ENCODE measurements at regions of chr5 and their contacts with region 1.

Region 1: DNA sequence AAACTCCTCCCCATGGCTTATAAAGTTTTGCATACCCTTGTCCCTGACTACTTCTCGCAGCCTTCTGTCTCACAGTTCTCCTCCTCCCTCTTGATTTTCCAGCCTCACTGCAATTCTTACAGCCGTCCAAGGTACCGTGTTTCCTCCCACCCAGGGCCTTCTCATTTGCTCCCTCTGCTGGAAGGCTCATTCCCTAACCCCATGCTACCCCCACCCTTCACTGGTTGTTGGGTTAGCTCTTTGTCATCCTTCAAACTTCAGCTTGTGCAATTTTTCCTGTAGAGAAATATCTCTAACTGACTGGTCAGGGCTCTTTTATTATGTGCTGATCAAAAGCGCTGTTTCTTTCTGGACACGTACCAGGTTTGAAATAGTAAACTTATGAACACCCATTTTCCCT is 329.2 kb downstream of the EBF1 start:
- DNase-seq: no peak
- H3K4me3 ChIP-seq: no peak overlapping the region
- H3K27ac ChIP-seq: peak overlapping the region; percentile 51
- H3K4me1 ChIP-seq: peaks cover 41% of the 10 kb centered on the region
- H3K27me3 ChIP-seq: no peaks in the 10 kb centered on the region
- CTCF ChIP-seq: no peak
- POLR2A ChIP-seq: no peak

Region 2: DNA sequence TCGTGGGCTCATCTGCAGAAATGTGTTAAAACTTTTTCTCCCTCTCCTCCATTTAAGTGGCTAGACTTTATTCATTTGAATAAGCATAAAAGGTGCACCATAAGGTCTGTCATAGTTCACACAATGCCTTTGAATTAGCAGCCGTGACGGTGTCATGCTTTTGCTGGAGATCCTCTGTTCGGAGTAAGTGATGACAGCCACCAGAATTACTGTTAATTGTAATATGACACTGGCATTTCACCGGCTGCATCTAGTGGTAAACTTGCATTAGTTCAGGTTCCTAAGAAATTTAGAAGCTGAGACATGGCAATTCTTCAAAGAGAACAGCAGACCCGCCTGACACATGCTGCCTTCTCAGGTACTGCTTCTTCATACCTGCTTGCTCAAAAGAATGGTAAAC is 87.5 kb after region 1 on chr5:
- intact Hi-C with region 1: no loop called
- DNase-seq: no peak
- H3K4me3 ChIP-seq: no peak overlapping the region
- H3K27ac ChIP-seq: no peak overlapping the region
- H3K4me1 ChIP-seq: peaks cover 7% of the 10 kb centered on the region
- H3K27me3 ChIP-seq: no peaks in the 10 kb centered on the region
- CTCF ChIP-seq: no peak
- POLR2A ChIP-seq: no peak

Region 3: GRCh38 chr5:158979749-158980521 is 209.4 kb after region 1 on chr5:
- intact Hi-C with region 1: no loop called
- DNase-seq: no peak
- H3K4me3 ChIP-seq: peak overlapping the region in 1 of 2 donors; percentile 14
- H3K27ac ChIP-seq: peak overlapping the region; percentile 46
- H3K4me1 ChIP-seq: peaks cover 43% of the 10 kb centered on the region
- H3K27me3 ChIP-seq: no peaks in the 10 kb centered on the region
- CTCF ChIP-seq: no peak
- POLR2A ChIP-seq: no peak

Region 4: DNA sequence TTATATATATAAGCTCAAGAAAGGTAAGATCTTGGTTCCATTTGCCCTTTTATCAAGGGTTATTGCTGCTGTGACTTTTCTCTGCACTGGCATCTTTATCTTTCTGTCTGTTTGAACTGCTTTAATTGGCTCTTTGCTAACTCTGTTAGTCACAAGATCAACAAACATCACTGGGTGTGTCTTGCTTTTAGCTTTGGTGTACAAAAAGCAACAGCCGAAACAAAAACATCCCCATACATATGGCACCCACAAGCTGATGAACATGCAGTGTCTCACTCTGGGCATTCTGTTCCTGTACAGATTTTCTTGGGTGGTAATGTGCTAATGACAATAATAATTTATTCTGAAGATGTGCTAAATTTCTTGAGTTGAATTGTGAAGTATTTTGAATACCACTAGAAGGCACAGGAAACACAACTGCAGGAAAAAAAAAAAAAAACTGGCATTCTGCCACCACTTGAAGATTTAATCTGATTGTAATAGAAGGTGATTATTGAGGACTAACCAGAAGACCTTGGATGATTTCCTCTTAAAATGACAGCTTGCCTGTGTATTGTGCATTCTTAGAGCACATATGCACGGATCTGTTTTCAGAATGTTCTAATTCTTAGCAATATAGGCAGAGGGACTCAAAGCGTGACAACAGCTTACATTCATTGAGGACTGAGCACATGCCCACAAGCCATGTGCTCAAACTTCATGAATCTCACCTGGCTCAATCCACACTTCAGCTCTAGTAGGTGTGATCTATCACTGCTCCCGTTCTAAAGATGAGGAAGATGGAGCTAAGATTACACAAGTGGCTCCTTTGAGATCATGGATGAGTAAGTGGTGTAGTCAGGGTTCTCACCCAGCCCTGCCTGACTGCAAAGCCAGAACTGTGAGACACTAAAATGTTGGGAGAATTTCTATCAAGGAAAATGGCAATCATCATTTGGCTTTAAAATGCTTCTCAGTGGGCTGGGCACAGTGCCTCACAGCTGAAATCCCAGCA is 232.8 kb after region 1 on chr5:
- intact Hi-C with region 1: loop called (anchors 10 kb)
- DNase-seq: no peak
- H3K4me3 ChIP-seq: no peak overlapping the region
- H3K27ac ChIP-seq: peak overlapping the region; percentile 61
- H3K4me1 ChIP-seq: peaks cover 43% of the 10 kb centered on the region
- H3K27me3 ChIP-seq: no peaks in the 10 kb centered on the region
- CTCF ChIP-seq: no peak
- POLR2A ChIP-seq: no peak

Region 5: DNA sequence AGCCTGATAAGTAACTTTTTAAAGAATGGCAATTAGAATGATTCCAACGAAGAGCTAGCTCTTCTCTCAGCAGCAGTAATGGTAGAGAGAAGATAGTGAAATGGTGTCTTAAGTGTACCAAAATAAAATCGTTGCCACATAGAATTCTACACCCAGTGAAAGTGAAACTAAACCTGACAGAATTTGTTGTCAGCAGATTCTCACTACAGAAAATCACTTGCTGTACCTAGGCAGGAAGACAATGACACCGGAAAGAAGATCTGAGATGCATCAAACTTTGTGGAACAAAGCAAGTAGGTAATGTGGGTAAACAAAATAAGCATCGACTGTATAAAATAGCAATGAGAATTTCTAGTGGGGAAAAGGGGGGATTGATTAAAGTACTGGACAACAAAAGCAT is 349.9 kb after region 1 on chr5:
- intact Hi-C with region 1: no loop called
- DNase-seq: no peak
- H3K4me3 ChIP-seq: peak overlapping the region in 1 of 2 donors; percentile 12
- H3K27ac ChIP-seq: no peak overlapping the region
- H3K4me1 ChIP-seq: no peaks in the 10 kb centered on the region
- H3K27me3 ChIP-seq: no peaks in the 10 kb centered on the region
- CTCF ChIP-seq: no peak
- POLR2A ChIP-seq: no peak